Lower lobe of right lung (tissue), 2 donors: ENCODE measurements at regions of chr4 and their contacts with region 1.

Region 1: DNA sequence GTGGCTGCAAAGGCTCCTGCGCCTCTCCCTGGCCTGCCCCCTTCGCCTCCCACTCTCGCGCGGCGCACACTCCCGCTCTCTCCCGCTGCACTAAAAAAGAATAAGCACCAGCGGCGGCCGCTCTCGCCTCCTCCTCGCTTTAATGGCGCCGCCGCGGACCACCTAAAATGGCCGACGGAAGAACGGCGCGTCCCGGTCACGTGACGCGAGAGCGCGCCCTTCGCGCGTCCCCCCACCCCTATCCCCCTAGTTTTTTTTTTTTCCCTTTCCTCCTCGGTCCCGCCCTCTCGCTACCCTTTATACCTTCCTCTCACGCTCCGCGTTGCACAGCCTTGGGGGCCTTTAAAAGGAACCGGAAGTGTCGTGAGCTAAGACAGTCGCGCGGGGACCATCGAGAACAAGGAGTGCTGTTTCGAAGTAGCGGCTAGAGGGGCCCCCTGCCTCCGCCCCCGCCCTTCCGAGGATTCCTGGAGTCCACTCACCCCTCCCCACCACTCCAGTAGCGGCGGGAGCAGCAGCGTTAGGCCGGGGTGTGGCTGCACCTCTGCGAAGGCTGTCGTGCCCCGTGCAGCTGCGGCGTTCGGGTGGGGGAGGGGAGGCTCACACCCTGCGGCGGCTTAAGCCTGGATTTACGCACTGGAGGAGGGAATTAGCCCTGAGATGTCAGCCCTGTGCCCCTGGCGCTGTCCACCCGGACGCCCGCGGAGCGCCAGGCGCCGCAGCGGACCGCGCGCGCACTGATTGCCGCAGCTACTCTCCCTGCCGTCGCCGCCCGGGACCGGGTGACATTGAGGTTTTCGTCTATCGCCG is at the start of gene HNRNPD:
- DNase-seq: peak; percentile 99
- ATAC-seq: peak; percentile 94 to 96
- H3K4me3 ChIP-seq: peak within 1 kb of the TSS; percentile 89
- H3K27ac ChIP-seq: peak within 1 kb of the TSS; percentile 99
- H3K4me1 ChIP-seq: peaks cover 42% of the 10 kb centered on the region
- H3K27me3 ChIP-seq: no peaks in the 10 kb centered on the region
- CTCF ChIP-seq: no peak
- total RNA-seq, gene HNRNPD: 146 TPM

Region 2: GRCh38 chr4:82428969-82429727 is 55.1 kb after region 1 on chr4:
- intact Hi-C with region 1: loop called (anchors 10 kb)
- DNase-seq: peak; percentile 94
- ATAC-seq: peak; percentile 88 to 94
- H3K4me3 ChIP-seq: peak overlapping the region; percentile 95
- H3K27ac ChIP-seq: peak overlapping the region; percentile 98
- H3K4me1 ChIP-seq: peaks cover 46% of the 10 kb centered on the region
- H3K27me3 ChIP-seq: no peaks in the 10 kb centered on the region
- CTCF ChIP-seq: peak; percentile 94

Region 3: DNA sequence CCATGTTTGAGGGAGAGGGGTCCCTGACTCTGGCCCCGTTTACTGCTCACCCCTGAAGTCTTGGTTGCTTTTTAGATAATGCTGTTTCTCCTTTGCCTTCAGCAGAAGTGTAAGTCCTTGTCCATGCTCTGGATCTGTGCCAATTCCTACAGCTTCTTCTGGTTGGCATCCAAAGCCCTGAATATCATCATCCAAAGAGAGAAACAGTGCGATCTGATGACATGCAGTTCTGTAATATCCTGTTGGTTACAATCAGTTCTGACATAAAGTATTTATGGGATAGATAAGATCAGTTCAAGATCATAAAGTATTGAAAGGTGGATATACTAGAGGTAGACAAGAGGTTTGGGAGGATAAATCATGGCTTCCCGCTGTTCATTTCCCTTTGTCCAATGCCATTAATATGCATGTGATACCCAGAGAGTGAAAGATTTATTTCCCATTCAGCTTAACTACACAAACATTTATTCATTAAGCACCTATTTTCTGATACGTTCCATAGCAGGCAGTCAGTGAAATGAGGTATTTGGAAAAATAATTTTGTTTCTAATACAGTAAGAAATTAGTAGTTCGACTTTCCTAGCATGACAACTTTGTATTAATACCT is 240.9 kb after region 1 on chr4:
- intact Hi-C with region 1: no loop called
- DNase-seq: no peak
- ATAC-seq: no peak
- H3K4me3 ChIP-seq: no peak overlapping the region
- H3K27ac ChIP-seq: no peak overlapping the region
- H3K4me1 ChIP-seq: no peaks in the 10 kb centered on the region
- H3K27me3 ChIP-seq: no peaks in the 10 kb centered on the region
- CTCF ChIP-seq: no peak